ENCODE measurements at regions of chr1 and their contacts with region 1.

Region 1: DNA sequence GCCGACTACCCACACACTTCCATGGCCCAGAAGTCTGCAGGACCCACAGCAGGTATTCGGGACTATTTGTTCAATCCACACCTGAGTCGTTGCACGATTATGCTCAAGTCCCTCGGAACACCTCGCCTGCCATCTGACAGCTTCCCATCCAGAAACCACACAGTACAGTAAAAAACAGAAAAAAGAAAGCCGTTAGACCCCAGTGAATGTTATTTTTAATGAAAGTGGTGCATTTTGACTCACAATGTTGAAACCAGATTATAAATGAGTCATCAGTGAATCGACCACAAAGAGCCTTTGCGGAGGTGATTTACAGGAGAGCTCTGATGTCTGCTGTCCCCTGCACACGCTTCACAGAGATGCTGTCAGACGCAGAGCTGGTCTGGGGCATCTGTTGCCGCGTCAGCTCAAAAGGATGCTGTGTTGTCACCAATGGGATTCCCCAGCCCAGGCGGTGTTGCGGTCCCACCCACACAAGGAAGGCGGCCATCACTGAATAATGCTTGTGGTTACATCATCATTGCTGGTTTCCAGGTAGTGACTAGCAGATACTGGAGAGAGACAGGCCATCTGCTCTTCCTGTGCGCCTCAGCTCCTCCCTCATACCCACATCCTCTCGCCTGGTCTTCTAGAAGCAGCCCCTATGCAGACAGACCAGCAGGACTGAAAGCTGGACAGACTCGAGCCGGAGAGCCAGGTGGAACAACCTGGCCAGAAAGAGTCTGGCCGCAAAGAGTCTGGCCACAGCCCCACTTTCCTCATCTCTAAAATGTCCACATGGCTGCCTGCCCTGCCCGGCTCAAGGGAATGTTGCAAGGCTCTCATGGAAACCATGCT is 116.8 kb downstream of the TOMM20 start:
- DNase-seq: peak; percentile 83
- CTCF ChIP-seq: no peak

Region 2: GRCh38 chr1:234473118-234473517 is 538.7 kb before region 1 on chr1:
- CTCF ChIA-PET with region 1: no interaction called
- POLR2A ChIA-PET with region 1: no interaction called
- DNase-seq: no peak
- CTCF ChIP-seq: no peak

Region 3: DNA sequence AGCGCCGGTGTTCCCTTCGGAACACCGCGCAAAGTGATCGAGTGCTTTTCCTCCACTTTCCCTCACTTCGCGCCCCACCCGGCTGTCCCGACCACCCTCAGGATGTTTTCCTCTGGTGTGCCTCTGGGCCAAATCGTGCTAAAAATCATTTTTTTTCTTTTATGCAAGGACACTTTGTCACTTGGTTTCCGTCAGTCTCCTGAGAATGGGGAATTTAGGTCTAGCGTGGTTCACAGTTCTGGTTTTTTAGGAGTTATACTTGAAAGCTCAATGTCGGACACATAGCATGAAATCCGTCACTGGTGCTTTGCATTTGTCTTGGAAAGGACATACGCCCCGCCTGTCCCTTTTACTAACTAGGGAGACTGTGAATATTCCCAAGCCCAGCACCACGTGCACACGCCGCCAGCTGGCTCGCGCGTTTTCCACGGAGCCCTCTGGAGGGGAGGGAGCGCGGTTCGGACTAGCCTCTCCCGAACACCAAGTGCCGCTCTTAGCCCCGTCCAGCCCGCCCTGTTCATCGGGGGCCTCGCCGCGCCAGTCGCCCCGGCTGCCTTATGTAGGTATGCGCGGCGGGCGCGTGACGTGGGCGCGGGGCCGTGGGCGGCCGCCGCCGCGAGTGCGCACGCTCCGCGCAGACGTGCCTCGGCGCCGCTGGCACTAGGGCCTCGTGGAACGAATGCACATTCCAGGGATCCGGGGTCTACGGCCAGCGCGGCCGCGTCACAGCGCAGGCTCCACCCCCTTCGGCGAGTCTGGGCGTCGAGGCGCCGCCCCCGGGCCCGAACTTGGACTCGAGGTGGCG is 401.3 kb before region 1 on chr1:
- CTCF ChIA-PET with region 1: no interaction called
- POLR2A ChIA-PET with region 1: interaction called, 10 read pairs
- DNase-seq: peak; percentile 90
- CTCF ChIP-seq: no peak

Region 4: DNA sequence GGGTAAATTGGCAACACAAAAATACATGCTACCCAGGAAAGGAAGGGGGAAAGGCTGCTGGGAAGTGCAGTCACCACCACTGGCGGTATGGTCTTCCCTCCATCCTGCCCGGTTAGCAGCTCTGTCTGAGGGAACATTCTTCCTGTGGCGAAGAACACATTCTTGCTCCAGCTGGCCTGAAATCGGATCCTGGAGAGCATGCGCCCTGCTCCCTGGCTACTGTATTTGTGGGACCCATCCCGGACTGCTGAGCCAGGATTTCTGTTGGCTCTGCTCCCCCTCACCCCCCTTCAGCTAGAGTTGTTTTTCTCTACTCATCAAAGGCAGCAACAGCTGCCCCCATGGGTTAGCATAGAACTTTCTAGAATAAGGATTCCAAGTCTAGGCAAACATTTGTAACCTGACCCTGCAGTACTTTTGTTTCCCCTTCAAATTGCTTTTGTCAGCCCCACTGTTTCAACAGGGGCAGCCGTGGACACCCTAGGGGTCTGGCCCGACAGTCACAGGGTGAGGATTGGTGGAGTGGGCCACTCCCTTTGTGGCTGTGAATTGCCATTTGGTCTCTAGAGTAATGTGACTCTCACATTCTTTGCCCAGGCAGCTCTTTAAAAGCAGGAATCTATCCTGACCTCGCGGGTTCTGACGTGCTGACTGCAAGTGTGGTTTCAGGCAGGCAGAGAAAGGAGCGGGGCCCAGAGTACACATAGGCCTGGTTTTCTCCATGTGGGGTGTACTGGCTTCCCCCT is 40.9 kb before region 1 on chr1:
- CTCF ChIA-PET with region 1: interaction called, 4 read pairs
- POLR2A ChIA-PET with region 1: interaction called, 12 read pairs
- DNase-seq: no peak
- CTCF ChIP-seq: no peak

Region 5: GRCh38 chr1:234978397-234979295 is 33.2 kb before region 1 on chr1:
- CTCF ChIA-PET with region 1: interaction called, 7 read pairs
- POLR2A ChIA-PET with region 1: interaction called, 17 read pairs
- DNase-seq: peak; percentile 64
- CTCF ChIP-seq: no peak

Region 6: GRCh38 chr1:235022981-235023710 is 11.3 kb after region 1 on chr1:
- CTCF ChIA-PET with region 1: interaction called, 15 read pairs
- POLR2A ChIA-PET with region 1: interaction called, 6 read pairs
- DNase-seq: peak; percentile 58
- CTCF ChIP-seq: no peak

Region 7: GRCh38 chr1:235050911-235051360 is 39.1 kb after region 1 on chr1:
- CTCF ChIA-PET with region 1: interaction called, 5 read pairs
- POLR2A ChIA-PET with region 1: interaction called, 12 read pairs
- DNase-seq: peak; percentile 76
- CTCF ChIP-seq: no peak

Region 8: GRCh38 chr1:235075188-235075926 is 63.5 kb after region 1 on chr1:
- CTCF ChIA-PET with region 1: interaction called, 6 read pairs
- POLR2A ChIA-PET with region 1: interaction called, 22 read pairs
- DNase-seq: peak; percentile 81
- CTCF ChIP-seq: no peak